Tibial artery (tissue), 4 donors: ENCODE measurements at regions of chr2 and their contacts with region 1.

Region 1: GRCh38 chr2:181570833-181571661 is 85.9 kb downstream of the CERKL start:
- DNase-seq: no peak
- H3K4me3 ChIP-seq: no peak overlapping the region
- H3K27ac ChIP-seq: no peak overlapping the region
- H3K4me1 ChIP-seq: no peaks in the 10 kb centered on the region
- H3K27me3 ChIP-seq: no peaks in the 10 kb centered on the region
- CTCF ChIP-seq: no peak

Region 2: DNA sequence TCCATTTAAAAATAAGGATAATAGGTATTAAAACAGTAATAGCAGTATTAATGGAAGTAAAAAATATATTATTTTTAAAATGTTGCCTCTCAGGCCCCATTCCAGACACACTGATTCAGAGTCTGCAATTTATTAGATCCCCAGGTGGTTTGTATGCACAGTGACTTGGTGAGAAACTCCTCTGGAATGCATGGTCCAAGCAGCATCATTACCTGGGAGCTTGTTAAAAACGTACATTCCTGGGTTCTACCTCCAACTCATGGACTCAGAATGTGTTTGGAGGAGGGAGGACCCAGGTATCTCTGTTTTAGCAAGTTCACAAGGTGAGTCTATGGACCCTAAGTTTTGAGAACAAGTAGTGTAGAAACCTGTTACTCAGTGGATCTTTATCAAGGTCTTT is 18.2 kb before region 1 on chr2:
- intact Hi-C with region 1: loop called (anchors 2 kb)
- DNase-seq: no peak
- H3K4me3 ChIP-seq: no peak overlapping the region
- H3K27ac ChIP-seq: no peak overlapping the region
- H3K4me1 ChIP-seq: no peaks in the 10 kb centered on the region
- H3K27me3 ChIP-seq: no peaks in the 10 kb centered on the region
- CTCF ChIP-seq: no peak